ENCODE measurements at regions of chr4 and their contacts with region 1.

Region 1: GRCh38 chr4:110224812-110225211 is 26.4 kb upstream of the ELOVL6 start:
- DNase-seq: peak; percentile 12
- H3K4me3 ChIP-seq: no peak overlapping the region
- CTCF ChIP-seq: no peak

Region 2: DNA sequence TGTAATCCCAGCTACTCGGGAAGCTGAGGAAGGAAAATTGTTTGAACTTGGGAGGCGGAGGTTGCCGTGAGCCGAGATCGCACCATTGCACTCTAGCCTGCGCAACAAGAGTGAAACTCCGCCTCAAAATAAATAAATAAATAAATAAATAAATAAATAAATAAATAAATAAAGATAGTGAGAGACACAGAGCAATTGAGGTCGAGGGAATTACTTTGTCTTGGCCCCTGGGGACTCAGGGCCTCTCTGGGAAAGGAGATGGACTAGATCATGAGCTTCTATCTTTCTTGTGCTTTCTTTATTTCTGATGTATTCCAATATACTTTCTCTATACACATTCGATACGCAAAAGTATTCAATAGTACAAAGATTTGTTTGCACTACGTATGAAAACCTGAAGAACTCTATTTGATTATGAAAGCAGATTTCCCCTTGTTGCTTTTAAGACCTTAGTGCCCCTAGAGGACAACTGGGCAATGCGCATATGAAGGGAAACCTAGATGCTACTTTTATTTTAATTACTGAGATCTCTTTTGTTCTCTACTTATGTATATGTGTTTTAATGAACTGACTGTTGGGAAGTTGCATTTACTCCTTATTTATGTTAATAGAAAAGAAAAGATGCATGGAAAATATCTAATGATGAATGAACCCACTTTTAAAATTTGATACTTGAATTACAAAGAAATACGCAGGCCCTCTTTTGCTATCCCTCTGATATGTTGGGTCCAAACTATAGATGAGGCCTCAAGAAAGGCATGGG is 13.6 kb before region 1 on chr4:
- CTCF ChIA-PET with region 1: interaction called, 11 read pairs
- POLR2A ChIA-PET with region 1: interaction called, 3 read pairs
- DNase-seq: no peak
- H3K4me3 ChIP-seq: no peak overlapping the region
- CTCF ChIP-seq: peak; percentile 67

Measured in AG04449 (cell line).